Activated naive CD4-positive, alpha-beta T cell treated with anti-CD3 and anti-CD28 coated beads for 36 hours (primary cell): ENCODE measurements at regions of chr14 and their contacts with region 1.

Region 1: GRCh38 chr14:67137744-67138371 is 51.4 kb upstream of the GARIN2 start:
- DNase-seq: no peak
- H3K4me3 Mint-ChIP-seq: no peak overlapping the region
- H3K27ac Mint-ChIP-seq: no peak overlapping the region
- H3K4me1 Mint-ChIP-seq: peaks cover 28% of the 10 kb centered on the region
- H3K27me3 Mint-ChIP-seq: no peaks in the 10 kb centered on the region

Region 2: DNA sequence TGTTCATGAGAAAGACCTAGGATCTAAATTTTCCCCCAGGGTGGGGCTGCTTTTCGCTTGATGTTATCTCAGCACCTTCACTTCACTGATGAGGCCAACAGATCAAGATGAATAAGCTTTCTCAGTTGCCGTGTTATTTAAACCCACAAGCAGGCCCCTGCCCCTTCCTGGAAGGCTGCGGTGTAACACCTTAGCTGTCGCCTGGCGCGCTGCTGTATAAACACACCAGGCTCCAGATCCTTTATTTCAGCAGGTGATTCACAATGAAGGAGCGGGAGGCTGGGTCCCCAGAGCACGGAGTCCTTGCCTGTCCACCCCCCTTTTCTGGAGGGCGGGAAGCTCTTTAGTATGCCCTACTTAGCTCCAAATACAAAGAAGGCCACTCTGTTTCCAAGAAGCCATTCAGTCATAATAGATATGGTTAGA is 1209.9 kb before region 1 on chr14:
- CTCF ChIA-PET with region 1: no interaction called
- intact Hi-C with region 1: loop called (anchors 5 kb)
- DNase-seq: peak; percentile 96
- H3K4me3 Mint-ChIP-seq: no peak overlapping the region
- H3K27ac Mint-ChIP-seq: peak overlapping the region; percentile 22
- H3K4me1 Mint-ChIP-seq: peaks cover 41% of the 10 kb centered on the region
- H3K27me3 Mint-ChIP-seq: no peaks in the 10 kb centered on the region

Region 3: GRCh38 chr14:66507722-66508546 is 629.9 kb before region 1 on chr14 and contains the start of gene GPHN:
- CTCF ChIA-PET with region 1: interaction called, 3 read pairs
- intact Hi-C with region 1: loop called (anchors 1 kb)
- DNase-seq: peak; percentile 92
- H3K4me3 Mint-ChIP-seq: peak within 1 kb of the TSS; percentile 96
- H3K27ac Mint-ChIP-seq: peak within 1 kb of the TSS; percentile 85
- H3K4me1 Mint-ChIP-seq: peaks cover 28% of the 10 kb centered on the region
- H3K27me3 Mint-ChIP-seq: peaks cover 7% of the 10 kb centered on the region
- total RNA-seq, gene GPHN: 14.2 to 21.4 TPM

Region 4: GRCh38 chr14:66752109-66752508 is 385.7 kb before region 1 on chr14:
- CTCF ChIA-PET with region 1: no interaction called
- intact Hi-C with region 1: loop called (anchors 1 kb)
- DNase-seq: no peak
- H3K4me3 Mint-ChIP-seq: no peak overlapping the region
- H3K27ac Mint-ChIP-seq: no peak overlapping the region
- H3K4me1 Mint-ChIP-seq: peaks cover 7% of the 10 kb centered on the region
- H3K27me3 Mint-ChIP-seq: no peaks in the 10 kb centered on the region

Region 5: GRCh38 chr14:67110011-67110410 is 27.8 kb before region 1 on chr14:
- CTCF ChIA-PET with region 1: no interaction called
- intact Hi-C with region 1: no loop called
- DNase-seq: no peak
- H3K4me3 Mint-ChIP-seq: no peak overlapping the region
- H3K27ac Mint-ChIP-seq: no peak overlapping the region
- H3K4me1 Mint-ChIP-seq: no peaks in the 10 kb centered on the region
- H3K27me3 Mint-ChIP-seq: no peaks in the 10 kb centered on the region

Region 6: GRCh38 chr14:67187210-67187609 is 49.4 kb after region 1 on chr14:
- CTCF ChIA-PET with region 1: interaction called, 5 read pairs
- intact Hi-C with region 1: loop called (anchors 1 kb)
- DNase-seq: no peak
- H3K4me3 Mint-ChIP-seq: no peak overlapping the region
- H3K27ac Mint-ChIP-seq: no peak overlapping the region
- H3K4me1 Mint-ChIP-seq: peaks cover 17% of the 10 kb centered on the region
- H3K27me3 Mint-ChIP-seq: peaks cover 3% of the 10 kb centered on the region